IMR-90 (cell line): ENCODE measurements at regions of chr3 and their contacts with region 1.

Region 1: DNA sequence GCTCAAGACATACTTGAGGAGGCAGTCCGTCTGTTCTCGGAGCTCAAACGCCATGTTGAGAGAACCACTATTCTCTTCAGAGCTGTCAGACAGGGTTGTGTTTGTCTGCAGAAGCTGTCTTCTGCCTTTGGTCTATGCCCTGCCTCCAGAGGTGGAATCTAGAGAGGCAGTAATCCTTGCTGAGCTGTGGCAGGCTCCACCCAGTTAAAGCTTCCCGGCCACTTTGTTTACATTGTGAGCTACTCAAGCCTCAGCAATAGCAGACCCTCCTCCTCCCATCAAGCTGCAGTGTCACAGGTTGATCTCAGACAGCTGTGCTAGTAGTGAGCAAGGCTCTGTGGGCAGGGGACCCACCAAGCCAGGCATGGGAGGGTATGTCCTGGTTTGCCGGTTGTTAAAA is 8.9 kb downstream of the OR5AC2 start:
- DNase-seq: no peak
- ATAC-seq: no peak
- H3K4me3 ChIP-seq: no peak overlapping the region
- H3K27ac ChIP-seq: no peak overlapping the region
- H3K4me1 ChIP-seq: no peaks in the 10 kb centered on the region
- H3K27me3 ChIP-seq: no peaks in the 10 kb centered on the region
- CTCF ChIP-seq: no peak
- POLR2A ChIP-seq: no peak
- RAD21 ChIP-seq: no peak

Region 2: GRCh38 chr3:97895216-97895615 is 200.7 kb before region 1 on chr3:
- CTCF ChIA-PET with region 1: no interaction called
- POLR2A ChIA-PET with region 1: no interaction called
- dilution Hi-C with region 1: no loop called
- in situ Hi-C with region 1: no loop called
- intact Hi-C with region 1: no loop called
- DNase-seq: no peak
- ATAC-seq: no peak
- H3K4me3 ChIP-seq: no peak overlapping the region
- H3K27ac ChIP-seq: no peak overlapping the region
- H3K4me1 ChIP-seq: no peaks in the 10 kb centered on the region
- H3K27me3 ChIP-seq: no peaks in the 10 kb centered on the region
- CTCF ChIP-seq: no peak
- POLR2A ChIP-seq: no peak
- RAD21 ChIP-seq: no peak

Region 3: DNA sequence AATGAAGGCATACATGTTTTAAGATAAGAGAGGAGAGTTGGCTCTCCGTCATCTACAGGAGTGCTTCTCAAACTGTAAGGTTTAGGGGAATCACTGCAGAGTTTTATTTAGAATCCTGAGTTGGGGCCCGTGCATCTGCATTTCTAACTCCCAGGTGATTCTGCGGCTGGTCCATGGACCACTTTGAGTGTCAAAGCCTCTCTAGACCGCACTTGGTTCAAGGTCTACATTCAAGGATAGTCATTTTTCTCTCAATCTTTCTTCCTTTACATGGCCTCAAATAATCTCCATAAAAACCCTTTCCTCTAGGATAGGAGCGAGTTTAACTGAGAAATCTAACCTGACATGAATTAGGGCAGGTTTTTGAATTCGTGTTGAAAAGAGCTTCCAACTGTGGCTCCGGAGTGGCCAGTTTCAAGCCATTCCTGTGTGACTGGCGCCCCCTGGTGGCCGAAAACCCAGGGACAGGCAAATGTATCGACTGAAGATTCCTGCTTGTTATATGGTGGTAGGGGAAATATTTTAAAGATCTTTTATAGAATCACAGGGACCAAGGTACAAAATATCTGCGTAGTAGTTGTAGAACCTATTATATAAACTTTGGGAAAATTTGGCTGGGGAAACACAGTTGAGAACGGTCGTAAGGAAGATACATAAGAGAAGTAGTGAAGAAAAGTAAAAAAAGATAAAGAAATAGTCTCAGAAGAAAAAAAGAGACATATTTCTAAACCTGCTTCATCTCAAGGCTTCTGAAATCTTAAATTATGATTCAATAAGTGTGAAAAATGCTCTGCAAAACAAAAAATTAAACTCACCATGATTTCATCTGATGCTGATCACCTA is 72.7 kb before region 1 on chr3:
- CTCF ChIA-PET with region 1: no interaction called
- POLR2A ChIA-PET with region 1: no interaction called
- dilution Hi-C with region 1: no loop called
- in situ Hi-C with region 1: no loop called
- intact Hi-C with region 1: no loop called
- DNase-seq: peak; percentile 68
- ATAC-seq: peak; percentile 87
- H3K4me3 ChIP-seq: no peak overlapping the region
- H3K27ac ChIP-seq: no peak overlapping the region
- H3K4me1 ChIP-seq: no peaks in the 10 kb centered on the region
- H3K27me3 ChIP-seq: peaks cover 4% of the 10 kb centered on the region
- CTCF ChIP-seq: peak; percentile 96
- POLR2A ChIP-seq: 0 out of 2 replicates have a peak, but pooled peaks have one; percentile 42
- RAD21 ChIP-seq: peak; percentile 97

Region 4: GRCh38 chr3:98068824-98069223 is 27.0 kb before region 1 on chr3:
- CTCF ChIA-PET with region 1: no interaction called
- POLR2A ChIA-PET with region 1: no interaction called
- dilution Hi-C with region 1: no loop called
- in situ Hi-C with region 1: no loop called
- intact Hi-C with region 1: loop called (anchors 2 kb)
- DNase-seq: no peak
- ATAC-seq: no peak
- H3K4me3 ChIP-seq: no peak overlapping the region
- H3K27ac ChIP-seq: no peak overlapping the region
- H3K4me1 ChIP-seq: no peaks in the 10 kb centered on the region
- H3K27me3 ChIP-seq: no peaks in the 10 kb centered on the region
- CTCF ChIP-seq: no peak; the same call in 1 of the 2 replicates
- POLR2A ChIP-seq: no peak
- RAD21 ChIP-seq: no peak